ENCODE measurements at regions of chr6 and their contacts with region 1.

Region 1: GRCh38 chr6:47309291-47310130 is at the start of gene TNFRSF21:
- DNase-seq: peak; percentile 92
- H3K4me3 ChIP-seq: peak within 1 kb of the TSS; percentile 61 to 90 (median 85)
- H3K27ac ChIP-seq: peak within 1 kb of the TSS; percentile 60
- H3K4me1 ChIP-seq: peaks cover 21% of the 10 kb centered on the region
- H3K27me3 ChIP-seq: no peaks in the 10 kb centered on the region
- CTCF ChIP-seq: peak; percentile 80 to 98
- total RNA-seq, gene TNFRSF21: 70.3 to 188 TPM

Region 2: GRCh38 chr6:46719099-46719498 is 590.4 kb before region 1 on chr6:
- CTCF ChIA-PET with region 1: no interaction called
- dilution Hi-C with region 1: no loop called
- in situ Hi-C with region 1: no loop called
- intact Hi-C with region 1: loop called (anchors 10 kb)
- DNase-seq: peak; percentile 97
- H3K4me3 ChIP-seq: no peak overlapping the region
- H3K27ac ChIP-seq: peak overlapping the region; percentile 4
- H3K4me1 ChIP-seq: peaks cover 24% of the 10 kb centered on the region
- H3K27me3 ChIP-seq: no peaks in the 10 kb centered on the region
- CTCF ChIP-seq: no peak

Region 3: GRCh38 chr6:46862381-46862780 is 447.1 kb before region 1 on chr6:
- CTCF ChIA-PET with region 1: no interaction called
- dilution Hi-C with region 1: no loop called
- in situ Hi-C with region 1: loop called (anchors 25 kb)
- intact Hi-C with region 1: no loop called
- DNase-seq: no peak
- H3K4me3 ChIP-seq: no peak overlapping the region
- H3K27ac ChIP-seq: no peak overlapping the region
- H3K4me1 ChIP-seq: no peaks in the 10 kb centered on the region
- H3K27me3 ChIP-seq: no peaks in the 10 kb centered on the region
- CTCF ChIP-seq: peak; percentile 3 to 12

Region 4: DNA sequence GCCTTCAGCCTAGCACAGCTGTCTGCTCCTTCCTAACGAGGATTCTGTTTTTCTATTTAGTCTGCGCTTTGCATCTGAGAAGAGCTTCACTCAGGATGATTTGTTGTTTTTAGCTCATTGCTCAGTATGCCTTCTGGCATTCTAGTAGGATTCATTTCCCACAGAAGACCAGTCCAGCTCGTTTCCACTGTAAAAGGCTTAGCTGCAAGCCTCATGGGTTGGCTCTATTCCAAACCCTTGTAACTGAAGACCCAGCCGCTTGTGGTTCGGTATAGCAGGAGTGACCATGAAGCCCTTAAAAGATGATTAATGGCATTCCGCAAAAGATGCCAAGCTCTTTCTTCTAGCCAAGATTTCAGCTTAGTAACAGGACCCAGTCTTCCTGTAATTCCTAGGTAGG is 274.6 kb before region 1 on chr6:
- CTCF ChIA-PET with region 1: interaction called, 5 read pairs
- dilution Hi-C with region 1: no loop called
- in situ Hi-C with region 1: no loop called
- intact Hi-C with region 1: loop called (anchors 5 kb)
- DNase-seq: peak; percentile 99
- H3K4me3 ChIP-seq: peak overlapping the region in 2 of 3 experiments; percentile 28 to 31
- H3K27ac ChIP-seq: peak overlapping the region; percentile 41
- H3K4me1 ChIP-seq: peaks cover 24% of the 10 kb centered on the region
- H3K27me3 ChIP-seq: no peaks in the 10 kb centered on the region
- CTCF ChIP-seq: no peak

Region 5: GRCh38 chr6:47079638-47080037 is 229.9 kb before region 1 on chr6:
- CTCF ChIA-PET with region 1: no interaction called
- dilution Hi-C with region 1: no loop called
- in situ Hi-C with region 1: no loop called
- intact Hi-C with region 1: loop called (anchors 1 kb)
- DNase-seq: no peak
- H3K4me3 ChIP-seq: no peak overlapping the region
- H3K27ac ChIP-seq: no peak overlapping the region
- H3K4me1 ChIP-seq: peaks cover 34% of the 10 kb centered on the region
- H3K27me3 ChIP-seq: no peaks in the 10 kb centered on the region
- CTCF ChIP-seq: peak in 1 of 2 donors; percentile 19

Region 6: DNA sequence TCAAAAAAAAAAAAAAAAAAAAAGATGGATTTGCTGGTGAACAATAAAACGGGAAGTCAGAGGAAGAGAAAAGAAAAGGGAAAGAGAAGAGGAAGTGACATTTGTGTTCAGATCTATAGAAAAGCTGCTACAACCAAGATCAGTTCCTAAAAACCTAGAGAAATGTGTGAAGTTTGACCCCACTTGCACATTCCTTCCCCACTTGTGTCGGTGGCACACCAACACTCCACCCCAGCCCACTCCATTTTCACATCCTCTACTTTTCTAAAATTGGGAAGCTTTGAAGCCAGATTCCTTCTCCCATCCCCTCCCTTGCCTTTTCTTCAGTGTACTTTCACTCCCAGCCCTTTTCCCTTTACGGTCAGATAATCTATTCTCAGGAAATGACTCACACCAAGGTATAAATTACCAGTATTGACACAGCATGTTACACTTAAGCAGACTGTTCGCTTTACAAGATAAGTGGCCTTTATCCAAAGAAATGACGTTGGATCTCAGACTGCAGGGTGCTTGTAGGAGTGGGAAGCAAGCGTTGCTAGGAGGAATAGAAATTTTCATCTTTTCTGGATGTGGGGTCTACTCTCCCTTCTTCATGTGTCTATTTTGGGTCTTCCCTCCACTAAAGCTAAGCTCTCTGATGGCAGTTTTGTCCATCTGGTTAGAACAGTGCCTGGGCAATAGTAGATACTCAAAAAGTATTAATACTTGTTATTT is 174.9 kb before region 1 on chr6:
- CTCF ChIA-PET with region 1: no interaction called
- dilution Hi-C with region 1: no loop called
- in situ Hi-C with region 1: no loop called
- intact Hi-C with region 1: no loop called
- DNase-seq: peak; percentile 94
- H3K4me3 ChIP-seq: peak overlapping the region in 1 of 3 experiments; percentile 18
- H3K27ac ChIP-seq: peak overlapping the region; percentile 98
- H3K4me1 ChIP-seq: peaks cover 29% of the 10 kb centered on the region
- H3K27me3 ChIP-seq: no peaks in the 10 kb centered on the region
- CTCF ChIP-seq: no peak

Region 7: GRCh38 chr6:47242483-47243386 is 66.8 kb before region 1 on chr6:
- CTCF ChIA-PET with region 1: no interaction called
- dilution Hi-C with region 1: no loop called
- in situ Hi-C with region 1: no loop called
- intact Hi-C with region 1: loop called (anchors 5 kb)
- DNase-seq: peak; percentile 93
- H3K4me3 ChIP-seq: no peak overlapping the region
- H3K27ac ChIP-seq: peak overlapping the region; percentile 62
- H3K4me1 ChIP-seq: peaks cover 20% of the 10 kb centered on the region
- H3K27me3 ChIP-seq: no peaks in the 10 kb centered on the region
- CTCF ChIP-seq: no peak

Region 8: GRCh38 chr6:47321577-47321976 is 12.1 kb after region 1 on chr6:
- CTCF ChIA-PET with region 1: no interaction called
- dilution Hi-C with region 1: no loop called
- in situ Hi-C with region 1: no loop called
- intact Hi-C with region 1: no loop called
- DNase-seq: no peak
- H3K4me3 ChIP-seq: no peak overlapping the region
- H3K27ac ChIP-seq: no peak overlapping the region
- H3K4me1 ChIP-seq: no peaks in the 10 kb centered on the region
- H3K27me3 ChIP-seq: no peaks in the 10 kb centered on the region
- CTCF ChIP-seq: no peak

Region 9: GRCh38 chr6:47413752-47414422 is 104.4 kb after region 1 on chr6:
- CTCF ChIA-PET with region 1: no interaction called
- dilution Hi-C with region 1: no loop called
- in situ Hi-C with region 1: no loop called
- intact Hi-C with region 1: no loop called
- DNase-seq: peak; percentile 67
- H3K4me3 ChIP-seq: peak overlapping the region; percentile 43 to 45 (median 45)
- H3K27ac ChIP-seq: peak overlapping the region; percentile 61
- H3K4me1 ChIP-seq: peaks cover 5% of the 10 kb centered on the region
- H3K27me3 ChIP-seq: no peaks in the 10 kb centered on the region
- CTCF ChIP-seq: peak; percentile 88 to 96

Measured in mammary epithelial cell (primary cell).